ENCODE measurements at regions of chr11 and their contacts with region 1.

Region 1: GRCh38 chr11:110092515-110093404 is at the start of gene ZC3H12C:
- DNase-seq: peak; percentile 38
- H3K4me3 Mint-ChIP-seq: peak within 1 kb of the TSS; percentile 74
- H3K27ac Mint-ChIP-seq: peak within 1 kb of the TSS; percentile 63
- H3K4me1 Mint-ChIP-seq: peaks cover 11% of the 10 kb centered on the region
- H3K27me3 Mint-ChIP-seq: peaks cover 49% of the 10 kb centered on the region
- total RNA-seq, gene ZC3H12C: 0.40 to 0.50 TPM

Region 2: GRCh38 chr11:110077831-110078325 is 14.9 kb before region 1 on chr11:
- CTCF ChIA-PET with region 1: interaction called, 21 read pairs
- POLR2A ChIA-PET with region 1: no interaction called
- DNase-seq: peak; percentile 21
- H3K4me3 Mint-ChIP-seq: no peak overlapping the region
- H3K27ac Mint-ChIP-seq: peak overlapping the region; percentile 60
- H3K4me1 Mint-ChIP-seq: peaks cover 13% of the 10 kb centered on the region
- H3K27me3 Mint-ChIP-seq: peaks cover 16% of the 10 kb centered on the region

Region 3: GRCh38 chr11:110148775-110149744 is 56.3 kb after region 1 on chr11:
- CTCF ChIA-PET with region 1: no interaction called
- POLR2A ChIA-PET with region 1: no interaction called
- DNase-seq: no peak
- H3K4me3 Mint-ChIP-seq: no peak overlapping the region
- H3K27ac Mint-ChIP-seq: no peak overlapping the region
- H3K4me1 Mint-ChIP-seq: no peaks in the 10 kb centered on the region
- H3K27me3 Mint-ChIP-seq: peaks cover 7% of the 10 kb centered on the region